Tibial artery (tissue), 4 donors: ENCODE measurements at regions of chr1 and their contacts with region 1.

Region 1: GRCh38 chr1:153217212-153217611 is at the start of gene PRR9:
- DNase-seq: no peak
- H3K4me3 ChIP-seq: no peak within 1 kb of the TSS
- H3K27ac ChIP-seq: no peak within 1 kb of the TSS
- H3K4me1 ChIP-seq: no peaks in the 10 kb centered on the region
- H3K27me3 ChIP-seq: peaks cover 0 to 3% of the 10 kb centered on the region in 2 donors
- CTCF ChIP-seq: no peak

Region 2: DNA sequence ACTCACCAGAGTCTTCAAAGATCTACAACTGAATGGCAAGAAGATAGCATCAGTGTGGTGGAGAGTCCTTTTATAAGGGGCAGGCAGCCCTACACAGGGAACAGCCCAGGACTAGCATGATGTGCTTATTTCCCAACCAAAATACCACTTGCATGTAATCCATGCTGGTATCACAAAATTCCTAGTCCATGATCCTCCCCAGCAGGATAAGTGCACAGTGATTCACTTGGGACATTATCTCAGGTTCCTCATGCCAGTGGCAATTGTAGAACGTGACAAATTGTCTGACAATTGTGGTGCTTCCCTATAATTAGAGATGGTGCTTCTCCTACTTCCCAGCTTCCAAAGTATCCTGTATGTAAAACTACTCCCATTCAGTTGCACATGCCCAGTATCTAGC is 66.4 kb before region 1 on chr1 and contains the start of gene SPRR2G:
- intact Hi-C with region 1: loop called (anchors 2 kb)
- DNase-seq: no peak
- H3K4me3 ChIP-seq: no peak within 1 kb of the TSS
- H3K27ac ChIP-seq: no peak within 1 kb of the TSS
- H3K4me1 ChIP-seq: no peaks in the 10 kb centered on the region
- H3K27me3 ChIP-seq: no peaks in the 10 kb centered on the region
- CTCF ChIP-seq: no peak

Region 3: GRCh38 chr1:153312570-153313193 is 95.5 kb after region 1 on chr1 and contains the start of gene PGLYRP3:
- intact Hi-C with region 1: no loop called
- DNase-seq: peak in 1 of 2 donors; percentile 16
- H3K4me3 ChIP-seq: no peak within 1 kb of the TSS
- H3K27ac ChIP-seq: no peak within 1 kb of the TSS
- H3K4me1 ChIP-seq: no peaks in the 10 kb centered on the region
- H3K27me3 ChIP-seq: peaks cover 0 to under 1% of the 10 kb centered on the region in 2 donors
- CTCF ChIP-seq: no peak

Region 4: DNA sequence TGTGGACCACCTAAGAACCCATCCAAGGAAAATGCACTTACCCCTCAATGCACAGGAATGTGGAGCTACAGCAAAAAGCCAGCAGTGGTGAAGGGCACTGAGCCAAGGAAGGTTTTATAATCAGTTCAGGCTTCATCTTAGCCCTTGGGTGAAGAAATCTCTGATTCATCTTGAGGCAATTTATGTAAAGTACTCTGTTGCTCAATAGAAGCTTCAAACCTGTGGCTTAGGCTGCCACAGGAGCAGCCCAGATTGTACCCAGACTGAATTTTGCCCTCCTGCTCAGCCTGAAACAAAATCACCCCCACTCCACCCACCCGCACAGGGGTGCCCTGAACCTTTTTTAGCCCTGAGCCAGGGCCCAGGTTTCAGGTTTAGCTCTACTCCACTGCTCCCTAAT is 158.3 kb after region 1 on chr1 and contains the start of gene S100A12:
- intact Hi-C with region 1: no loop called
- DNase-seq: peak in 1 of 2 donors; percentile 15
- H3K4me3 ChIP-seq: no peak within 1 kb of the TSS
- H3K27ac ChIP-seq: no peak within 1 kb of the TSS
- H3K4me1 ChIP-seq: no peaks in the 10 kb centered on the region
- H3K27me3 ChIP-seq: peaks cover 0 to 3% of the 10 kb centered on the region in 2 donors
- CTCF ChIP-seq: no peak